ENCODE measurements at regions of chr10 and their contacts with region 1.

Region 1: GRCh38 chr10:110304780-110305421 is at the start of gene SMNDC1:
- DNase-seq: peak; percentile 94 to 98 (median 97)
- ATAC-seq: peak; percentile 88
- H3K4me3 ChIP-seq: peak within 1 kb of the TSS; percentile 72 to 85
- H3K4me3 Mint-ChIP-seq: peak within 1 kb of the TSS; percentile 98
- H3K27ac ChIP-seq: peak within 1 kb of the TSS; percentile 89 to 95
- H3K27ac Mint-ChIP-seq: peak within 1 kb of the TSS; percentile 100
- H3K4me1 ChIP-seq: peaks cover 45% of the 10 kb centered on the region
- H3K4me1 Mint-ChIP-seq: peaks cover 55% of the 10 kb centered on the region
- H3K27me3 ChIP-seq: no peaks in the 10 kb centered on the region
- H3K27me3 Mint-ChIP-seq: no peaks in the 10 kb centered on the region
- CTCF ChIP-seq: no peak
- total RNA-seq, gene SMNDC1: 43.3 to 44.8 TPM

Region 2: GRCh38 chr10:110210674-110211464 is 94.0 kb before region 1 on chr10:
- CTCF ChIA-PET with region 1: interaction called, 24 read pairs
- POLR2A ChIA-PET with region 1: interaction called, 28 read pairs
- intact Hi-C with region 1: loop called in 1 of 2 experiments (anchors 2 kb)
- DNase-seq: peak; percentile 77 to 94 (median 90)
- ATAC-seq: peak; percentile 48
- H3K4me3 ChIP-seq: peak overlapping the region; percentile 59 to 91
- H3K4me3 Mint-ChIP-seq: peak overlapping the region; percentile 94
- H3K27ac ChIP-seq: peak overlapping the region; percentile 60 to 90
- H3K27ac Mint-ChIP-seq: peak overlapping the region; percentile 99
- H3K4me1 ChIP-seq: peaks cover 22% of the 10 kb centered on the region
- H3K4me1 Mint-ChIP-seq: peaks cover 47% of the 10 kb centered on the region
- H3K27me3 ChIP-seq: peaks cover 0 to 13% of the 10 kb centered on the region in 2 experiments
- H3K27me3 Mint-ChIP-seq: peaks cover 17% of the 10 kb centered on the region
- CTCF ChIP-seq: no peak

Region 3: DNA sequence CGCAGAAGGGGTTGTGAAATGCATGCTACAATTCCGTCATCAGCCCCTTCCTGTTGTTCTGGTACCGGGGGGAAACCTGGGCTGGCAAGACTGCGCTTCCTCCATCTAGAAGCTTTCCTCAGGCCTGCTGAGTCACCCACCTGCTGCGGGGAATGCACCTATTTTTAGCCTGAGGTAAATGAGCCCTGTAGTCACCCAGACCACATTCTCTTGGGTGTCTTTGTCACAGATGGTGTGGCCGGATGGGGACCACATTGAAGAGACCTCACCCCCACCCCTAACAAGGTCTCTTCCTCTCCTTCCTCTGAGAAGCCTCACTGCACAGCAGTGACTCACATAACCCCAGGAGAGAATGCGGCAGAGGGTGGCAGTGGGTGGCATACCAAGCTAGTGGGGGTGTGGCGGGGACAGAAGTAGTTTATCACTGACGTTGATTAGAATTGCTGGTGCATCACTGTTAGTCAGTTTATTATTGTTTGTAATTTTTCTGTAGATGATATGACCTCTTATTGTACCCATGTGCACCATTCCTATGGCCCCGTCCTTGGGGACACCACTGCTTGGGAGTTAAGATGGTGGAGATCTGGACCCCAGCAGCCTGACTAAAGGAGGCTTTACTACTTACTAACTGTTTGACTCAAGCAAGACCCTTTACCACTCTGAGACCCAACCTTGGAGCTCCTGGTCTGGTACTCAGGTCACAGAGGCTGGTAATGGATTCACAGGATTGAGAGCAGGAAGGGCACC is 109.8 kb after region 1 on chr10:
- CTCF ChIA-PET with region 1: no interaction called
- POLR2A ChIA-PET with region 1: no interaction called
- intact Hi-C with region 1: loop called (anchors 1 to 2 kb)
- DNase-seq: peak; percentile 66 to 97 (median 86)
- ATAC-seq: peak; percentile 95
- H3K4me3 ChIP-seq: no peak overlapping the region
- H3K4me3 Mint-ChIP-seq: peak overlapping the region; percentile 33
- H3K27ac ChIP-seq: peak overlapping the region in 1 of 2 experiments; percentile 38
- H3K27ac Mint-ChIP-seq: peak overlapping the region; percentile 82
- H3K4me1 ChIP-seq: peaks cover 26% of the 10 kb centered on the region
- H3K4me1 Mint-ChIP-seq: peaks cover 29% of the 10 kb centered on the region
- H3K27me3 ChIP-seq: no peaks in the 10 kb centered on the region
- H3K27me3 Mint-ChIP-seq: peaks cover 2% of the 10 kb centered on the region
- CTCF ChIP-seq: no peak

Region 4: DNA sequence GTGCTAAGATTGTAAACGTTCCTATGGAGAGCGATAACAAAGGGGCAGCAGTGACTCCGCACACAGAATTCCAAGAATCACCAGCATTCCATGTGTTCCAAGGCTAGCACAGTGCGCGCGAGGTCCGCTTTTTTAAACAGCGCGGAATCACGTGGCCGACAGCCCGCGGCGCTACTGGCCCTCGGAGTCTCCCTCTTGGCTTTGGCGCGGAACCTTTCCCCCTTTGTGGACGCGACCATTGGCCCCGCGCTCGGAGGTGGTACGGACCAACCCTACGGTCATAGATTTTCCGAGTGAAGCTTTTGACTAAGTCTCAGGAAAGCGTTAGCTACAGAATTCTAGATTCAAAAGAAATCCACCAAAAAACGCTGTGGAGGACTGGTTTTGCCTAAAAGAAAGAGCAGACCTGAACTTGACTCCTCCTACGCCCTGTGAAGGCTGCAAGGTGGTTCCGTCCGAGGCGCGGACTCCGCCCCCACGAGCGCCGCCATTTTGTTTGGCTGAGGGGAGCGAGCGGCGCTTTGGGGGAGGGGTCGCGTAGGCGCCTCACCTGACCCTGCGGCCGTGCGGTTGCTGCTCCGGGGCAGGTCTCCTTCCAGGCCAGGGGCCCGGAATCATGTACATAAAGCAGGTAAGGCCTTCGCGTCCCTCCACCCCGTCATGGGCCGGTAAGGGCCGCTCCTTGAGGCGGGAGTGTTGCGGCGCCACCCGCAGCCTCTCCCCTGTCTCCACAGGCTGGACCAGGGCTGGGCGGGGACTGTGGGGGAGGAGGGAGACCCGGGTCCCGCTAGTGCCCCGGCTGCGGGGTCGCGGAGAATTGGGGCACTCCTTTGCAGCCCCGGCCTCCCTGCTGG is 262.5 kb after region 1 on chr10 and contains the start of gene SMC3:
- CTCF ChIA-PET with region 1: interaction called, 3 read pairs
- POLR2A ChIA-PET with region 1: interaction called, 6 read pairs
- intact Hi-C with region 1: loop called (anchors 1 kb)
- DNase-seq: peak; percentile 83 to 95 (median 90)
- ATAC-seq: peak; percentile 89
- H3K4me3 ChIP-seq: peak within 1 kb of the TSS; percentile 92 to 93
- H3K4me3 Mint-ChIP-seq: peak within 1 kb of the TSS; percentile 97
- H3K27ac ChIP-seq: peak within 1 kb of the TSS; percentile 85 to 86
- H3K27ac Mint-ChIP-seq: peak within 1 kb of the TSS; percentile 96
- H3K4me1 ChIP-seq: peaks cover 44% of the 10 kb centered on the region
- H3K4me1 Mint-ChIP-seq: peaks cover 44% of the 10 kb centered on the region
- H3K27me3 ChIP-seq: no peaks in the 10 kb centered on the region
- H3K27me3 Mint-ChIP-seq: peaks cover 12% of the 10 kb centered on the region
- CTCF ChIP-seq: no peak
- total RNA-seq, gene SMC3: 35.1 to 37.9 TPM

Region 5: DNA sequence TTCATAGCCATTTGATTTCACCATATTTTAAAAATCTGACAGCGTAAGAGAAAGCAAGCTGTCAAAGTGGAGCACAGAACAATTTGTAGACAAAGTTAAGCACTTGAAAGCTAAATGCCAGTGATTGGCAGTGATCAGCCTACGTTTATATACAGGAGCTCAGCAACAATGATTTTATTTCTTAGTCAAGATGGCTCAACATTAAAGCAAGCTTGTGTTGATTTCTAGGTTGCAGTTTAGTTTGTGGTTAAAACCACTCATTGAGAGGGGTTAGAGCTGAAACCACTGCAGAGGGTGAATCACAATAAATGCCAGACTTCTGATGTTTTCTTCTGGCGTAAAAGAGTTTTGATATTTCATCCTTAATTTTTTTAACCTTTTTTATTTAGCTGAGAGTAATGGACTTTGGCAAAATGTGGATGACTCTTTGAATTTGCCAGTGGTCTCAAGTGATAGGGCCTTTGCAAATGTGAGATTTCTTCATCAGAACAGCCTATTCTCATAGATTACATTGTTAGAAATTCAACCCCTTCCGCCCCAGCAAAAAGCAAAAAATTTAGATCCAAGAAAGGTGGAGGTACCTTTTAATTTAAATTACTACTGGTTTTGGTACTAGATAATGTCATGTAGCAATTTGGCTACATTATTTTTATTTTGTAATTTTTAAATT is 688.3 kb after region 1 on chr10:
- CTCF ChIA-PET with region 1: no interaction called
- POLR2A ChIA-PET with region 1: no interaction called
- intact Hi-C with region 1: loop called in 1 of 2 experiments (anchors 5 kb)
- DNase-seq: peak in 4 of 9 experiments; percentile 19 to 75 (median 45)
- ATAC-seq: peak; percentile 97
- H3K4me3 ChIP-seq: peak overlapping the region; percentile 5 to 14
- H3K4me3 Mint-ChIP-seq: peak overlapping the region; percentile 70
- H3K27ac ChIP-seq: peak overlapping the region in 1 of 2 experiments; percentile 20
- H3K27ac Mint-ChIP-seq: peak overlapping the region; percentile 72
- H3K4me1 ChIP-seq: peaks cover 29% of the 10 kb centered on the region
- H3K4me1 Mint-ChIP-seq: peaks cover 45% of the 10 kb centered on the region
- H3K27me3 ChIP-seq: no peaks in the 10 kb centered on the region
- H3K27me3 Mint-ChIP-seq: no peaks in the 10 kb centered on the region
- CTCF ChIP-seq: no peak

Measured in CD8-positive, alpha-beta T cell (primary cell).